K562 (cell line): ENCODE measurements at regions of chr7 and their contacts with region 1.

Region 1: DNA sequence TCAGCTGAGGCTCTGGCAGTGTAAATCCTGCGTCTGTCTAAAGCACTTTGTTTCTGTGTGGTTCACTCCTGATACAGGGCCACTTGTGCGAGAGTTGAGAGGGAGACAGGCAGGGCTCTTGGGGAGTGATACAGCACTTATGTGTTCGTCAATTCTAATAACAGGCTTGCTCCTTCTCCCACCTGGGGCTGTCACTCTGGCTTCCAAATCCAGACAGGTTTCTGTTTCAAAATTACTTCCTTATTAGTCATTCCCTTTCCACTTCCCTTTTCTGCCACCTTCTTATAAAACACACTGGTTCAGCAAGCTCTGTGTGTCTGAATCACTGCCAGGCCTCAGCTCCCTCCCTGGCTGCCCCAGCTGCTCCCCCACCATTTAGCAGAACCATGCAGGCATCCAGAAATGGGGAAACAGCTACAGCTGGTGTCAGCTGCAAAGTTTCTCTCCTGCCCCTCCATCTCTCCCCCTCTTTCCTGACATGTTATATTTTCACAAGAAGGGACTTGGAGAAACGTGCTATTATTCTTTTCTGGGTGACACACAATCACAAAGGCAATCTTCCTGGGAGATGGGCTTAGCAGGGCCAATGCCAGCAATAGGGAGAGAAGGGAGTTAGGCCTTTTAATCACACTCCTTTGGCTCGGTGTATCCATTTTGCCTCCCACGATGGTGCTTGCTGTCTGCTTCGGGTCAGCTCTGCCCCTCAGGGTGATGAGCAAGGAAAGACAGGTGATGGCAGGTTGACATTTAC is 58.4 kb upstream of the ZNRF2 start:
- DNase-seq: no peak
- ATAC-seq: no peak; the same call in 2 of the 3 replicates
- H3K4me3 ChIP-seq: no peak overlapping the region
- H3K27ac ChIP-seq: no peak overlapping the region
- H3K4me1 ChIP-seq: no peaks in the 10 kb centered on the region
- H3K27me3 ChIP-seq: peaks cover 5 to 41% of the 10 kb centered on the region in 2 experiments; a peak in 4 of 5 replicates
- CTCF ChIP-seq: no peak
- EP300 ChIP-seq: no peak
- POLR2A ChIP-seq: no peak
- RAD21 ChIP-seq: no peak

Region 2: DNA sequence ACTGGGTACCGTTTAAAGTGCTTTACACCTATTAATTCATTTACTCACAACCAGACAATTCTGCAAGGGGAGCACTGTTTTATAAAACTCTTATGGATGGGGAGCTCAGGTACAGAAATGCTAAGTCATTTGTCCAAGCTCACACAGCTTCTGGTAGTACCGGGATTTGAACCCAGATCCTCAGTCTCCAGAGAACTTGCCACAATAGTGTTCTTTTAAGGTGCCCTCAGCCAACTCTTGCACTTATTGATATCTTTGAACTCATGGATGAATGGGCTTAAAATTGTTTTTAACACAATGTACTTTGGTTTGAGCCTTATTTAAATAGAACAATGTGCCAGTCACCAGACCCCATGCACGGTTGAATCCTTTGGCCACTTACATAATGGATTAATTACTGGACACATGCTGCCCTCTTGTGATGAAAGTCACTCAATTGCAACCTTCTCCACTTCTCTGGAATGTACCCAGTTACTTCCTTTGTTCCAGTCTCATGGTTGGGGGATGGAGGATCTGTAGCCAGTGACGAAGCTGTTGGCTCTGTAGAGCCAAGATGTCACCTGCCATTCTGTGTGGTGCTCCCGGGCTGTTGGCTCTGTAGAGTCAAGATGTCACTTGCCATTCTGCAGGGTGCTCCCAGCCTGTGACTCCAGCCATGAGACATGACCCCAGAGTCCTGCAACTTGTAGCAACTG is 186.9 kb after region 1 on chr7:
- CTCF ChIA-PET with region 1: interaction called, 5 read pairs
- POLR2A ChIA-PET with region 1: no interaction called
- in situ Hi-C with region 1: no loop called
- intact Hi-C with region 1: loop called (anchors 2 kb)
- DNase-seq: peak; percentile 36 to 77 (median 54)
- ATAC-seq: peak; percentile 94
- H3K4me3 ChIP-seq: no peak overlapping the region
- H3K27ac ChIP-seq: no peak overlapping the region
- H3K4me1 ChIP-seq: no peaks in the 10 kb centered on the region; a peak in 1 of 5 replicates
- H3K27me3 ChIP-seq: no peaks in the 10 kb centered on the region
- CTCF ChIP-seq: peak; percentile 55 to 75 (median 75)
- EP300 ChIP-seq: no peak
- POLR2A ChIP-seq: no peak
- RAD21 ChIP-seq: peak; percentile 85 to 92

Region 3: GRCh38 chr7:30504347-30505173 is 278.5 kb after region 1 on chr7 and contains the start of gene GGCT:
- CTCF ChIA-PET with region 1: no interaction called
- POLR2A ChIA-PET with region 1: no interaction called
- in situ Hi-C with region 1: no loop called
- intact Hi-C with region 1: no loop called
- DNase-seq: peak; percentile 99 to 100 (median 100)
- ATAC-seq: peak; percentile 98
- H3K4me3 ChIP-seq: peak within 1 kb of the TSS; percentile 82
- H3K27ac ChIP-seq: peak within 1 kb of the TSS; percentile 82
- H3K4me1 ChIP-seq: peaks cover 14 to 16% of the 10 kb centered on the region in 2 experiments; a peak in 4 of 5 replicates
- H3K27me3 ChIP-seq: no peaks in the 10 kb centered on the region
- CTCF ChIP-seq: 0 out of 6 replicates have a peak, but pooled peaks of 1 of the 3 experiments have one; percentile 4
- EP300 ChIP-seq: peak; percentile 23
- POLR2A ChIP-seq: peak; percentile 94
- RAD21 ChIP-seq: no peak
- polyA plus RNA-seq, gene GGCT: 285 to 349 TPM